ENCODE measurements at regions of chr19 and their contacts with region 1.

Region 1: GRCh38 chr19:47428177-47428894 is 9.0 kb upstream of the MEIS3 start:
- DNase-seq: peak; percentile 97
- H3K4me3 ChIP-seq: peak overlapping the region; percentile 24; the same call in 1 of the 2 replicates
- H3K27me3 ChIP-seq: peaks cover 9% of the 10 kb centered on the region
- CTCF ChIP-seq: no peak

Region 2: GRCh38 chr19:47284324-47284899 is 143.9 kb before region 1 on chr19:
- CTCF ChIA-PET with region 1: interaction called, 19 read pairs
- POLR2A ChIA-PET with region 1: no interaction called
- DNase-seq: no peak
- H3K4me3 ChIP-seq: no peak overlapping the region
- H3K27me3 ChIP-seq: no peaks in the 10 kb centered on the region
- CTCF ChIP-seq: peak; percentile 84

Region 3: GRCh38 chr19:47362321-47362720 is 66.0 kb before region 1 on chr19:
- CTCF ChIA-PET with region 1: no interaction called
- POLR2A ChIA-PET with region 1: no interaction called
- DNase-seq: no peak
- H3K4me3 ChIP-seq: no peak overlapping the region
- H3K27me3 ChIP-seq: no peaks in the 10 kb centered on the region
- CTCF ChIP-seq: no peak

Region 4: DNA sequence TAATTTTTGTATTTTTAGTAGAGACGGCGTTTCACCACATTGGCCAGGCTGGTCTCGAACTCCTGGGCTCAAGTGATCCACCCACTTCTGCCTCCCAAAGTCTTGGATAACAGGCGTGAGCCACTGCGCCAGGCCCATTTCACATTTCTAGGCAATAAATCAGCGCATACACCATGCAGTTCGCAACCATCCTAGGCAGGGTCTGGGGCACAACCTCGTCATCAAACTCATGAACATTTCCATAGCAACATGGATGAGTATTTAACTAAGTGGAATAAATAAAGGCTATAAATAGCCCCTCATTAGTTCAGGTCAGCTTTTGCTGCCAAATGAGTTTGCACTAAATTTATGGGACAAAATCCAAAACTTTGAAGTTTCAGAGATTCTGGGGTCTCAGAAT is 17.2 kb before region 1 on chr19:
- CTCF ChIA-PET with region 1: no interaction called
- POLR2A ChIA-PET with region 1: no interaction called
- DNase-seq: no peak
- H3K4me3 ChIP-seq: no peak overlapping the region
- H3K27me3 ChIP-seq: no peaks in the 10 kb centered on the region
- CTCF ChIP-seq: no peak